ENCODE measurements at regions of chr7 and their contacts with region 1.

Region 1: DNA sequence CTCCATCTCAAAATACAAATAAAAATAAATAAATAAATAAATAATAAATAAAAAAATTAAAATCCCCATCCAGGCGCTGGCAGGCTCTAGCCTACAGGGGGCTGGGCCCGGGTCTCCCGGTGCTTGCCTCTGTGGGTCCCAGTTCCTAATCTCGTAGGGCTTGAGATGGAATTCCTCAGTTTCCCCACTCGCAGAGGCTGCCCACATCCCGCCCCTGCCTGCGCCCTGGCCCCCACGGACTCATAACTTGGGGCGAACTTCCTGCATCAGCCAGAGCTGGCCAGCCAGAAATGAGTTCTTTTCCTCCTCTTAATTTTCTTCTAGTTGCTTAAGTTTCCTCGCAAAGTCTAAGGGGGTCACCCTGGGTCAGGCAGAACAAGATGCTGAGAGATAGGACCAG is 22.0 kb upstream of the SRRM3 start:
- DNase-seq: no peak
- ATAC-seq: no peak
- H3K4me3 ChIP-seq: no peak overlapping the region
- H3K27ac ChIP-seq: no peak overlapping the region
- H3K4me1 ChIP-seq: no peaks in the 10 kb centered on the region
- H3K27me3 ChIP-seq: no peaks in the 10 kb centered on the region
- CTCF ChIP-seq: no peak
- EP300 ChIP-seq: no peak
- POLR2A ChIP-seq: no peak
- RAD21 ChIP-seq: no peak

Region 2: GRCh38 chr7:76037310-76037709 is 142.4 kb before region 1 on chr7:
- CTCF ChIA-PET with region 1: no interaction called
- POLR2A ChIA-PET with region 1: no interaction called
- RAD21 ChIA-PET with region 1: no interaction called
- SMC1A ChIA-PET with region 1: no interaction called
- in situ Hi-C with region 1: no loop called
- intact Hi-C with region 1: no loop called
- DNase-seq: no peak
- ATAC-seq: no peak
- H3K4me3 ChIP-seq: no peak overlapping the region
- H3K27ac ChIP-seq: no peak overlapping the region
- H3K4me1 ChIP-seq: no peaks in the 10 kb centered on the region
- H3K27me3 ChIP-seq: no peaks in the 10 kb centered on the region
- CTCF ChIP-seq: no peak
- EP300 ChIP-seq: no peak
- POLR2A ChIP-seq: no peak
- RAD21 ChIP-seq: no peak

Region 3: DNA sequence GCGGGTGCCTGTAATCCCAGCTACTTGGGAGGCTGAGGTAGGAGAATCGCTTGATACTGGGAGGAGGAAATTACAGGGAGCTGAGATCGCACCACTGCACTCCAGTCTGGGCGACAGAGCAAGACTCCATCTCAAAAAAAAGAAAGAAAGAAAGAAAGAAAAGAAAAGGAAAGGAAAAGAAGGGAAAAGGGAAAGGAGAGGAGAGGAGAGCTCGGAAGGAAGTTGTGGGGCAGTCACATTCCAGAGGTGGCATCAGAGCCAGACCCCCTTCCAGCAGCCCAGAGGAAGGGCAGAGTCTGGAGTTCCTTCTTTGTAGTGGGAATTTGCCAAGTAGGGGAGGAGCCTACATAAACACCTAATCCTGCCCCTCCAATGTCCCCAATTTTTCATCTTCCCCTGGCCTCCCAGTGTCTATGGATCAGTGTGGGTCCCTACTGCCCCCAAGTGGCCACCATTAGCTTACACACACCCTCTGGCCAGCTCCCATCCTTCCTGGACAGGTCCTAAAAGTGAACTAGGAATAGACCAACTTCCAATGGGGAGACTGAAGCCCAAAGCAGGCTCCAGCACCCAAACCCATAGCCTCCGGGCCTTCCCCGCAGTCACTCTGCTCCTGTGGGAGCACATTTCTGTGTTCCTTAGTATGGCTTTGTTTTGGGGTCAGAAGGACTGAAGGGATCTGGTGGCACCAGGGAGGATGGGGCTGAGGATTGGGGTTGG is 83.2 kb after region 1 on chr7:
- CTCF ChIA-PET with region 1: interaction called, 44 read pairs
- POLR2A ChIA-PET with region 1: interaction called, 4 read pairs
- RAD21 ChIA-PET with region 1: interaction called, 23 read pairs
- SMC1A ChIA-PET with region 1: interaction called, 17 read pairs
- in situ Hi-C with region 1: no loop called
- intact Hi-C with region 1: loop called (anchors 1 kb)
- DNase-seq: no peak
- ATAC-seq: peak; percentile 85
- H3K4me3 ChIP-seq: no peak overlapping the region
- H3K27ac ChIP-seq: no peak overlapping the region
- H3K4me1 ChIP-seq: peaks cover 3% of the 10 kb centered on the region
- H3K27me3 ChIP-seq: no peaks in the 10 kb centered on the region; a peak in 1 of 4 replicates
- CTCF ChIP-seq: peak; percentile 76 to 79 (median 78)
- EP300 ChIP-seq: no peak
- POLR2A ChIP-seq: no peak
- RAD21 ChIP-seq: peak; percentile 73

Region 4: DNA sequence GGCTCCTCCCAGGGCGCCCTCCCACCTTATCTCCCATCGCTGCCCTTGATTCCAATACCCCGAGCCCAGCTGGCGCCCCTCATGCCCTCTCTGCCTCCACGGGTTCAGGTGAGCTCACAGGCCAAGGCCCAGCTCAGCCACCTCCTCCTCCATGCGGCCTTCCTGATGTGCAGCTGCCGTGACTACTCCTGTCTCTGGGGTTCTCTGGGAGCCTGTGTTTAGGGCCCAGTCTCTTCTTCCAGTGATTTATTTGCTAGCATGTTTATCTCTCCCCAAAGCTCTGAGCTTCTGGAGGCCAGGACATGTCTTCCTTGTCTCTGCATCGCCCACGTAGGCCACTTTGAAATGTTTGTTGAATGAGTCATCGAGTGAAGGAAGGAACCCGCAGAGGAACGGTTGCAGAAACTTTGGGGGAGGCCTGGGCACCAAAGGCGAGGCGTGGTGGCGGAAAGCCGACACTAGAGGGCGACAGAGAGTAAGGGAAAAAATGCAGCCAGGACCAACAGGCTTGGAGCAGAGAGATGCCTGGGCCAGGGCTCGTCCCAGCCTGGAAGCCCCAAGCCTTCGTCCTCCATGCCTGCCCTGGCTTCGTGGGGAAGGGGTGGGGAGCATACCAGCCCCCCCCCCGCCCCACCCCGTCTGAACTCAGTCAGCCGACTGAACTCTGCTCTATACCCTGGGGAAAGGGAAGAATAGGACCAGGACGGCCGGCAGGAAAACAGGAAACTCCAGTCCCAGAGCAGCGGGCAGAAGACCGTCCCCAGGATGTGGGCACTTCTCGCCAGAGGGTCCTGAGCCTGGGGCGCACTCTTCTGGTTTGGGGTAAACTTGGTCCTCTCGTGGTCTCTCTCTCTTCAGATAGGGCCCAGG is 111.9 kb after region 1 on chr7:
- CTCF ChIA-PET with region 1: interaction called, 14 read pairs
- POLR2A ChIA-PET with region 1: no interaction called
- RAD21 ChIA-PET with region 1: interaction called, 8 read pairs
- SMC1A ChIA-PET with region 1: interaction called, 5 read pairs
- in situ Hi-C with region 1: no loop called
- intact Hi-C with region 1: loop called (anchors 1 kb)
- DNase-seq: peak; percentile 77
- ATAC-seq: peak; percentile 93
- H3K4me3 ChIP-seq: no peak overlapping the region
- H3K27ac ChIP-seq: peak overlapping the region; percentile 13
- H3K4me1 ChIP-seq: peaks cover 6% of the 10 kb centered on the region
- H3K27me3 ChIP-seq: no peaks in the 10 kb centered on the region
- CTCF ChIP-seq: peak; percentile 95 to 98 (median 98); a peak in 5 of 6 replicates
- EP300 ChIP-seq: 0 out of 4 replicates have a peak, but pooled peaks of 1 of the 2 experiments have one; percentile 16
- POLR2A ChIP-seq: no peak
- RAD21 ChIP-seq: peak; percentile 81